Caco-2 (cell line): ENCODE measurements at regions of chr1 and their contacts with region 1.

Region 1: GRCh38 chr1:154669464-154670282 is 61.7 kb upstream of the ADAR start:
- DNase-seq: peak; percentile 74 to 75
- H3K4me3 ChIP-seq: no peak overlapping the region
- H3K4me3 Mint-ChIP-seq: no peak overlapping the region
- H3K27ac Mint-ChIP-seq: no peak overlapping the region
- H3K4me1 ChIP-seq: no peaks in the 10 kb centered on the region
- H3K4me1 Mint-ChIP-seq: no peaks in the 10 kb centered on the region
- H3K27me3 ChIP-seq: no peaks in the 10 kb centered on the region
- H3K27me3 Mint-ChIP-seq: peaks cover 3% of the 10 kb centered on the region
- CTCF ChIP-seq: peak; percentile 77 to 87

Region 2: DNA sequence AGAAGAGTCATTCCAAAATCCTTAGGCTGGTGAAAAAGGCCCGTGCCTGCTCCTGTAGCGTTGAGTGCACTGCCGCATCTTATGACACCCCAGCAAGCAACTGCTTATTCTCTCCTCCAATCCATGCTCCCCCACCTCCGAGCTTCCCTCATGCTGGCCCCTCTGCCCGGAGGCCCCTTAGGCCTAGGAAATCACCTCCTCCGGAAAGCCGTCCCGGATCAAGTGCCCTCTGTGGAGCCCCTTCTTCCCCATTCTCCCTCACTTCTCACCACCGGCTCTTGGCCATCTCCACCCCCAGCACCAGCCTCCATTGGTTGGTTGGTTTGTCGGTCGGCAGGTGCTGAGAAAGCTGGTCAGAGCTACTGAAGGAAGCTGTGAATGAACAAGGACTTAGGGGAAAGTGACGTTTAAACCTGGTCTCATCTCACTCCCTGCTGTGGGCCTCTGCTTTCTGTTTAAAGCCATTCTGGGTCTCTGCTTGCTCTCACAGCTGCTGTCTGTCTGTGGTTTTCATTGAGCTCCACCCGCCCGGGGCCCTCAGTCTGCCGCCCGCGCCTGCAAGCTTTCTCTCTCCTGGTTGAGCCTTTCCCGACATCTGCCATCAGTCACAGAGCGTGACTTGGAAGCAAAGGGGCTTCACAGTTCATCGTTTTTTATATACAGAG is 78.2 kb after region 1 on chr1:
- CTCF ChIA-PET with region 1: interaction called, 5 read pairs
- POLR2A ChIA-PET with region 1: no interaction called
- intact Hi-C with region 1: loop called (anchors 1 kb)
- DNase-seq: no peak
- H3K4me3 ChIP-seq: no peak overlapping the region
- H3K4me3 Mint-ChIP-seq: no peak overlapping the region
- H3K27ac Mint-ChIP-seq: no peak overlapping the region
- H3K4me1 ChIP-seq: no peaks in the 10 kb centered on the region
- H3K4me1 Mint-ChIP-seq: no peaks in the 10 kb centered on the region
- H3K27me3 ChIP-seq: peaks cover 3% of the 10 kb centered on the region
- H3K27me3 Mint-ChIP-seq: peaks cover 38% of the 10 kb centered on the region
- CTCF ChIP-seq: no peak

Region 3: DNA sequence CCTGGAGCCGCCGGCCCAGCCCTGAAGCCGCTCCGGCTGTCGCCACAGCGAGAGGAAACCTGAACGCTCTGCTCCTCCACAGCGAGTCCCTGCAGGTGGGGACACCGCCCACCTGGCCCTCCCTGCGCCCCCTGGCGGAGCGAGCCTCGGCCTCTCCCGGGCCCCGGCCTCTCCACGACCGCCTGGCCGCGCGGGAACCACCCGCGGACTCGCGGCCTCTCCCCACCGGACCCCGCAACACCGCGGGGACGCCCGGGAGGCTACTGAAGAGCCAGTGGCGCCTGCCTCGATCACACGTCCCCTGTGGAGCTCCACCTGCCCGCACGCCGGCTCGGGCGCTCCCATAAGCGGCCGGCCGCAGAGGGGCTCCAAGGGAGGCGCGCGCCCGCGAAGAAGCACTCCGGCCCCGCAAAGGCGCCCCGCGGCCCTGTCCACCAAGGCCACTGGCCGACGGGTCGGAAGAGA is 90.8 kb after region 1 on chr1:
- CTCF ChIA-PET with region 1: no interaction called
- POLR2A ChIA-PET with region 1: no interaction called
- intact Hi-C with region 1: loop called (anchors 1 kb)
- DNase-seq: peak; percentile 79 to 91
- H3K4me3 ChIP-seq: peak overlapping the region; percentile 56
- H3K4me3 Mint-ChIP-seq: peak overlapping the region; percentile 59
- H3K27ac Mint-ChIP-seq: no peak overlapping the region
- H3K4me1 ChIP-seq: no peaks in the 10 kb centered on the region; the same call in 1 of the 2 replicates
- H3K4me1 Mint-ChIP-seq: peaks cover 5% of the 10 kb centered on the region
- H3K27me3 ChIP-seq: no peaks in the 10 kb centered on the region
- H3K27me3 Mint-ChIP-seq: peaks cover 39% of the 10 kb centered on the region
- CTCF ChIP-seq: peak; percentile 82 to 93